RWPE1 (cell line): ENCODE measurements at regions of chr10 and their contacts with region 1.

Region 1: GRCh38 chr10:70461215-70461986 is 17.2 kb upstream of the PALD1 start:
- DNase-seq: peak; percentile 85
- H3K27ac ChIP-seq: peak overlapping the region; percentile 68
- CTCF ChIP-seq: peak; percentile 84

Region 2: DNA sequence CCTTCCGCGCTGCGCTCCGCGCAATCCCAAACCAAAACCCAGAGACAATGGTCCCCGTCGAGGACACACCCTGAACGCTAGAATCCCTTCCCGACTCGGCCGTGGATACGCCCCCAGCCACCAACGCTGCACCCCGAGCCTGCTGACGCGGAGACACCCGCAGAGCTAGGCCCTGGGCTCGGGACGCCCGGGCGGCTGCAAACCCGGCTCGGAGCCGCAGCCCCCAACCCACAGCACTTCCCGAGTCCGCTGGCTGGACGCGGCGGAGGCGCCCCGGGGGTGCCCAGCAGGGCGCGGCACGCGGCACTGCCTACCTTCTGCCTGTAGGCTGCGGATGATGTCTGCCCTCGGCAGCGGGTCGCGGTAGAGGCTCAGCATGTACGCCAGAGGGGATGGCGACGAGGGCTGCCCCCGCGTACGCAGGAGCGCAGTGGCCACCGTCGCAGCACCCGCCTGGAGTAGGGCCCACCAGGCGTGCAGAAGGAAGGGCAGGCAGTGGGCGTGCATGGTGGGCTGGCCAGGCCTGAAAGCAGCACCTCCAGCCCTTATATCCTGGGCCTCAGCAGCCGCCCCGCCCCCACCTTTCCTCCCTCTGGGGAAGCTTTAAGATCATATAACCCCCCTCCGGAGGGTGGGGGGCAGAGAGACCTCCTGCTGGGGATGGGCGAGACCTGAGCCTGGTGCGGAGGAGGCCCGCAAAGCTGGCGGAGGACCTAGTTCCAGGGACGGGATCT is 20.1 kb before region 1 on chr10 and contains the start of gene NODAL:
- CTCF ChIA-PET with region 1: interaction called, 13 read pairs
- POLR2A ChIA-PET with region 1: no interaction called
- DNase-seq: no peak
- H3K27ac ChIP-seq: no peak within 1 kb of the TSS
- CTCF ChIP-seq: no peak

Region 3: GRCh38 chr10:70478191-70479164 is 17.1 kb after region 1 on chr10 and contains the start of gene PALD1:
- CTCF ChIA-PET with region 1: interaction called, 18 read pairs
- POLR2A ChIA-PET with region 1: no interaction called
- DNase-seq: peak; percentile 56
- H3K27ac ChIP-seq: no peak within 1 kb of the TSS
- CTCF ChIP-seq: no peak

Region 4: DNA sequence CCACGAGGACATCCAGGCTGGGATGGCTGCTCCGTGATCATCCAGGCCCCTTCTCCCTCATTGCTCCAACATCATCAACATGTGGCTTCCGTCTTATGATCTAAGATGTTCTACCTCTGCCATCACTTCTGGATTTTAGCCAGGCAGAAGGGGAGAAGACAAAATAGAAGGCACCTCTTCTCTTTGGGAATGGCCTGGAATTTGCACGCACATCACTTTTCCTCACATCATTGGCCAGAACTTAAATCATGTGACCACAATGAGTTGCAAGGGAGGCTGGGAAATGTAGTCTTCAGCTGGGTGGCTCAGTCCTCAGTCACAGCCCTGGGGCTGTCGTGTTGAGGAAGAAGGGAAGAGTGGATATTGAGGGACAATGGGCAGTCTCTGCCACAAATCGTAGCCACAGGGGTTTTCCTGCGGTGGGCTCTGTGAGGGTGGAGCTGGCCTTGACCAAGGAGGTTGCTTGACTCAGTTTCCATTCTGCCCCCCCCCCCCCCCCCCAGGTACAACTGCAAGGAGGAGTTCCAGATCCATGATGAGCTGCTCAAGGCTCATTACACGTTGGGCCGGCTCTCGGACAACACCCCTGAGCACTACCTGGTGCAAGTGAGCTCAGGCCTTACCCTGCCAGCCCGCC is 67.4 kb after region 1 on chr10:
- CTCF ChIA-PET with region 1: interaction called, 13 read pairs
- POLR2A ChIA-PET with region 1: no interaction called
- DNase-seq: peak; percentile 67
- H3K27ac ChIP-seq: no peak overlapping the region
- CTCF ChIP-seq: no peak

Region 5: GRCh38 chr10:70540089-70540788 is 78.8 kb after region 1 on chr10:
- CTCF ChIA-PET with region 1: interaction called, 67 read pairs
- POLR2A ChIA-PET with region 1: no interaction called
- DNase-seq: peak; percentile 26
- H3K27ac ChIP-seq: no peak overlapping the region
- CTCF ChIP-seq: peak; percentile 26; the same call in 1 of the 2 replicates

Region 6: GRCh38 chr10:70575874-70576802 is 114.7 kb after region 1 on chr10:
- CTCF ChIA-PET with region 1: no interaction called
- POLR2A ChIA-PET with region 1: no interaction called
- DNase-seq: no peak
- H3K27ac ChIP-seq: no peak overlapping the region
- CTCF ChIP-seq: no peak